Activated CD4-positive, alpha-beta T cell treated with anti-CD3 and anti-CD28 coated beads, Interleukin-2, amount 10 ng/mL, durations not matched to agents 24 days and 14 days (primary cell): ENCODE measurements at regions of chr4 and their contacts with region 1.

Region 1: DNA sequence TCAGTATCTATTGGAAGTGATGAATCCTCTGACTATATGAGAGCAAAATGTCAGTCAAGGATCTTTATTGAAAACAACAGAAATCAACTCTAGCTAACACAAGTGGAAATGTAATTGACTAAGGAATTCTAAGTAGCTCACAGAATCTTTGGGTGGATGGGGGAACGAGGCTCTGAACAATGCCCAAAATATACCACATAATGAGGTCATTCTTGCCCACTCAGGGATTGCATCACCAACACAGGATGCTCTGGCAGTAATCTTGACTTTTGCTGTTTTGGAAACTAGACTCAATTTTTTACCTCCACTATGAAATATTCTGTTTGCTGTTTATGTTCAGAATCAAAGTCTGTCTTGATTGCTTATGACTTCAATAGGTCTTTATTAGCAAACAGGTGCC is 127.4 kb upstream of the UNC5C start:
- DNase-seq: no peak
- H3K4me3 Mint-ChIP-seq: no peak overlapping the region
- H3K27ac Mint-ChIP-seq: no peak overlapping the region
- H3K4me1 Mint-ChIP-seq: no peaks in the 10 kb centered on the region
- H3K27me3 Mint-ChIP-seq: no peaks in the 10 kb centered on the region

Region 2: DNA sequence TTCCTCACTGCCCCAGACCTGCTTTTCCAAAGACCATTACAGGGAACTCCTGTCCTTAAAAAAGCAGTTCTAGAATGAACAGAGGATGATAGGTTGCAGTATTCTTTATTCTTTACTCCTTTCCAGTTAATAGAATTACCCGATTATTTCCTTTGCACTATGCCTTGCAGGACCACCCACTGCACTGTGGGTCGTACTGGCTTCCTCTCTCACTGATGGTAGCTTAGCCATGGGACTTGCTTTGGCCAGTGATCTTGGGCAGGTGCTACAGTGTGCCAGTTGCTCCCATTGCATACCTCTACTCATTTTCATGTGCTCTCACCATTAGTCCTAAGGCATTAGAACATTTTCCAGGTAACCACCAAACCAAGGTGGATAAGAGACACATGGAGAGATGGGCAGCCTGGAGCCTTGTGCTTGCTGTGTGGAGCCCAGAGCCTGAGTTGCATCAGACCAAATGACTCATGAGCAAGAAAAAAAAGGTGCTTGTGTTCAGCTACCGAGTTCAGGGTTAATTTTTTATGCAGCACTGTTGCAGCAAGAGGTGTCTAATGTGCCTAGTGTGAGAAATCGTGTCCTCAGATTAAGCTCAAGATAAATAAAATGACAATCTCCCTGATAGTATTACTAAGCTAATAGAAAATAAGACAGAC is 119.9 kb before region 1 on chr4:
- intact Hi-C with region 1: no loop called
- DNase-seq: no peak
- H3K4me3 Mint-ChIP-seq: no peak overlapping the region
- H3K27ac Mint-ChIP-seq: no peak overlapping the region
- H3K4me1 Mint-ChIP-seq: no peaks in the 10 kb centered on the region
- H3K27me3 Mint-ChIP-seq: peaks cover 7% of the 10 kb centered on the region

Region 3: DNA sequence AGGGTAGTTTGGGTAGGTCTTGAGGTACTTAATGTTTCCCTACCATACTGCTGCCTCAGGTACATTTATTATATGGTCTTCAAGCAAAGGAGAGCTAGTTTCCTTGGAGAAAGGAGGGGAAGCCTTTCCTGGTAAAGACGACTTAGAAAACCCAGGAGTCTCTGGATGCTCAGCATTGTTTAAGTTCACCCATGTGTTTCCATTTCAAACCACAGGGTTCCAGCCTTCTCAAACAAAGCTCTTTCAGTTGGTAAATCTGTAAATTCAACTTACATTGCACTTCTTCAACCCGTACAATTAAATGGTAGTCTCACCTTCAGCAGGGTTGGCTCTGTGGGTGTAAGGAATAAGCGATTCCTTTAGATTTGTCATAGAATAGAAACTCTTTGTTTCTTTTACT is 15.5 kb before region 1 on chr4:
- intact Hi-C with region 1: loop called (anchors 1 kb)
- DNase-seq: no peak
- H3K4me3 Mint-ChIP-seq: no peak overlapping the region
- H3K27ac Mint-ChIP-seq: no peak overlapping the region
- H3K4me1 Mint-ChIP-seq: no peaks in the 10 kb centered on the region
- H3K27me3 Mint-ChIP-seq: no peaks in the 10 kb centered on the region